PC-3 (cell line): ENCODE measurements at regions of chr3 and their contacts with region 1.

Region 1: GRCh38 chr3:144375088-144375487 is 403.5 kb downstream of the DIPK2A start:
- DNase-seq: no peak
- ATAC-seq: no peak
- H3K4me3 ChIP-seq: no peak overlapping the region
- H3K27ac ChIP-seq: no peak overlapping the region
- H3K4me1 ChIP-seq: no peaks in the 10 kb centered on the region
- H3K27me3 ChIP-seq: no peaks in the 10 kb centered on the region
- CTCF ChIP-seq: no peak

Region 2: GRCh38 chr3:144437989-144438388 is 62.9 kb after region 1 on chr3:
- CTCF ChIA-PET with region 1: no interaction called
- POLR2A ChIA-PET with region 1: interaction called, 11 read pairs
- intact Hi-C with region 1: no loop called
- DNase-seq: no peak
- ATAC-seq: no peak
- H3K4me3 ChIP-seq: no peak overlapping the region
- H3K27ac ChIP-seq: no peak overlapping the region
- H3K4me1 ChIP-seq: peaks cover 6% of the 10 kb centered on the region; the same call in 1 of the 2 replicates
- H3K27me3 ChIP-seq: no peaks in the 10 kb centered on the region
- CTCF ChIP-seq: no peak